AG04449 (cell line): ENCODE measurements at regions of chr19 and their contacts with region 1.

Region 1: GRCh38 chr19:46076951-46077816 is 36.4 kb upstream of the IGFL4 start:
- DNase-seq: peak; percentile 9
- H3K4me3 ChIP-seq: peak overlapping the region; percentile 26; the same call in 1 of the 2 replicates
- CTCF ChIP-seq: peak; percentile 91

Region 2: GRCh38 chr19:46009530-46010510 is 67.4 kb before region 1 on chr19:
- CTCF ChIA-PET with region 1: interaction called, 523 read pairs
- POLR2A ChIA-PET with region 1: no interaction called
- DNase-seq: no peak
- H3K4me3 ChIP-seq: no peak overlapping the region
- CTCF ChIP-seq: peak; percentile 86

Region 3: GRCh38 chr19:46021531-46022041 is 55.6 kb before region 1 on chr19:
- CTCF ChIA-PET with region 1: interaction called, 523 read pairs
- POLR2A ChIA-PET with region 1: no interaction called
- DNase-seq: no peak
- H3K4me3 ChIP-seq: no peak overlapping the region
- CTCF ChIP-seq: no peak

Region 4: GRCh38 chr19:46040952-46041500 is 36.2 kb before region 1 on chr19 and contains the start of gene IGFL4:
- CTCF ChIA-PET with region 1: interaction called, 523 read pairs
- POLR2A ChIA-PET with region 1: interaction called, 3 read pairs
- DNase-seq: no peak
- H3K4me3 ChIP-seq: no peak within 1 kb of the TSS
- CTCF ChIP-seq: no peak

Region 5: GRCh38 chr19:46060012-46060411 is 17.2 kb before region 1 on chr19:
- CTCF ChIA-PET with region 1: interaction called, 46 read pairs
- POLR2A ChIA-PET with region 1: no interaction called
- DNase-seq: no peak
- H3K4me3 ChIP-seq: no peak overlapping the region
- CTCF ChIP-seq: no peak

Region 6: GRCh38 chr19:46101293-46101692 is 24.1 kb after region 1 on chr19:
- CTCF ChIA-PET with region 1: interaction called, 14 read pairs
- POLR2A ChIA-PET with region 1: no interaction called
- DNase-seq: no peak
- H3K4me3 ChIP-seq: no peak overlapping the region
- CTCF ChIP-seq: no peak

Region 7: DNA sequence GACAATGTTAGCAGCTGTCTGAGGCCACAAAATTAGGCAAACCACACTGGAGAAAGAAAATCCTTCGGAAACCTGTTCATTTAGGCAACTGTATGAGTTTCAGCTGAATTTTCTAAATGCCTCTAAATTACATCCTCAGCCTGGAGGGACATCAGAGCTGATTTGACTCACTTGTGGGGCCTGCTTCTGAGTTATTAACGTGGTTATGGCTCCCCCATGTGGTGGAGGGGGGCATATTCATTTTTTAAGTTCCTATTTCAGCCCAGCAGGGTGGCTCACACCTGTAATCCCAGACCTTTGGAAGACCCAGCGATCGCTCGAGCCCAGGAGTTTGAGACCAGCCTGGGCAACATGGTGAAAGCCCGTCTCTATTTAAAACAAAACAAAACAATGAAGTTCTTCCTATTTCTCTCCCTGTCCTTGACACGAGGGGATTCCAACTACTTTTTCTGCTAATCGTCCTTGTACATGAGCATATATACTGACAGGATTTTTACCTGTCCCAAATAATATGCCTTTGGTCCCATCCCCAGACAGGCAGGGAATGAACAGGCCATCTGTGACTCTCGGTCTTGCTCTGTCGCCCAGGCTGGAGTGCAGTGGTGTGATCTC is 188.1 kb after region 1 on chr19:
- CTCF ChIA-PET with region 1: interaction called, 485 read pairs
- POLR2A ChIA-PET with region 1: interaction called, 4 read pairs
- DNase-seq: no peak
- H3K4me3 ChIP-seq: no peak overlapping the region
- CTCF ChIP-seq: peak; percentile 49

Region 8: GRCh38 chr19:46435009-46435408 is 357.8 kb after region 1 on chr19:
- CTCF ChIA-PET with region 1: no interaction called
- POLR2A ChIA-PET with region 1: no interaction called
- DNase-seq: no peak
- H3K4me3 ChIP-seq: no peak overlapping the region
- CTCF ChIP-seq: no peak